GM18951 (cell line): ENCODE measurements at regions of chr9 and their contacts with region 1.

Region 1: DNA sequence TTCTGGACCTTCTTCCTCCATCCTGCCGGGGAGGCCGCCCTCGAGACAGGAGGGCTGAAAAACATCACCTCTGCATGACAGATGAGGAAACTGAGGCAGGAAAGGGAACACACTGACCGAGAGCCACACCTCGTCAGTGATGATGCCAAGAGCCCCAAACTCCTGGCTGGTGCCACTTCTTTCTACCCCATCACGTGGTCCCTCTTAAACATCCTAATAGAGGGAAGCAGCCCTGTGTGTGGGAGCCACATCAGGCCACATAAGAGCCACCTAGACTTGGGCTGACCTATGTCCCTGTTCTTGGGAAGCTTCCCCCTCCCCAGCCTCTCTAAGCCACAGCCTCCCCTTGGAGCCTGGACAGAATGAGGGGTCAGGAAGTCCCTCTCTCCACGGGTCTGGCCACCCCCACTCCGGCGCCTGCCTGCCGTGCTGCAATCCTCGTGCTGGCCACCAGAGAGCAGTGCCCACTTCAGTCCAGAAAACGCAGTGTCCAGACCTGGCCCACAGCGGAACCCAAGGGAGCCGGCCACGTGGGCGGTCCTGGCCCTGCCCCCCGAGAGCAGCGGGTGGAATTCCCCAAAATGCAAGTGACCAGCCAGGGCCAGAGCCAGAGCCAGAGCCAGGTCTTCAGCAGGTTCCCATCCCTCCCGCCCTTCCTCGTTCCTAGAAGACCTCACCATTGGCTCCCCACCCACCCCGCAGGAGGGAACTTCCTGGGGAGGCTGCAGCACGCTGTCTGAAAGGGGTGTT is 54.7 kb upstream of the SARDH start:
- POLR2A ChIP-seq: no peak

Region 2: GRCh38 chr9:133647765-133648469 is 145.0 kb before region 1 on chr9:
- in situ Hi-C with region 1: no loop called
- POLR2A ChIP-seq: no peak

Region 3: DNA sequence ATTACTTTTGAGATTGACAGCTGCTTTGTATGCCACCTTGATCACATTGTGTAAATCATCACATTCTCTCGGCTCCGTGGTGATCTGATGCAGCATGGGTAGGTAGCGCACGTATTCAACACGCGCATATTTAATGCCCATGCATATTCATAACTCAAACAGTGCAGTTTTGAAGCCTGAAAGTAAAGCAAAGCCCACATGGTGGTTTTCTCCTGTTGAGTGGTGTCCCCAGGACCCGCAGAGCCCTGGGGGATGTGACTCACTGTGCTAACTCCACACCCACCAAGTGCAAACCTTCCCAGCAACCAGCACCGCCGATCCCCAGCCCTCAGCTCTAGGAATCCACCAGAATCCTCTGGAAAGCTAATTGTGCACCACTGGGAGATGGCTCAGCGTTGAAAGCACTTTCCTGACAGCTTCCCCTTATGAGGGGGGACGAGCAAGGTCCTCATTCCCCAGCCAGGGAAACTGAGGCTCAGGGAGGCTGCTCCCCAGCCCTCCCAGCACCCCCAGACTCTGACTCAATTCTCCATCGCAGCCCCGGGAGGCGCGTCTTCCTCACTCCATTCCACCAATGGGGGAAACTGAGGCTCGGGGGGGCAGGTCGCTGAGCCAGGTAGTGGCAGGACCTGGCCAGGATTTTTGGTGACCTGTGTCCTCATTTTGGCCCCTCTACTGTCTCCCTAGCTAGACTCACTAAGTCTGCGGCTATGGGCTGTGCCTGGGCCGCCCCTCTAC is 101.1 kb before region 1 on chr9:
- in situ Hi-C with region 1: no loop called
- POLR2A ChIP-seq: no peak

Region 4: DNA sequence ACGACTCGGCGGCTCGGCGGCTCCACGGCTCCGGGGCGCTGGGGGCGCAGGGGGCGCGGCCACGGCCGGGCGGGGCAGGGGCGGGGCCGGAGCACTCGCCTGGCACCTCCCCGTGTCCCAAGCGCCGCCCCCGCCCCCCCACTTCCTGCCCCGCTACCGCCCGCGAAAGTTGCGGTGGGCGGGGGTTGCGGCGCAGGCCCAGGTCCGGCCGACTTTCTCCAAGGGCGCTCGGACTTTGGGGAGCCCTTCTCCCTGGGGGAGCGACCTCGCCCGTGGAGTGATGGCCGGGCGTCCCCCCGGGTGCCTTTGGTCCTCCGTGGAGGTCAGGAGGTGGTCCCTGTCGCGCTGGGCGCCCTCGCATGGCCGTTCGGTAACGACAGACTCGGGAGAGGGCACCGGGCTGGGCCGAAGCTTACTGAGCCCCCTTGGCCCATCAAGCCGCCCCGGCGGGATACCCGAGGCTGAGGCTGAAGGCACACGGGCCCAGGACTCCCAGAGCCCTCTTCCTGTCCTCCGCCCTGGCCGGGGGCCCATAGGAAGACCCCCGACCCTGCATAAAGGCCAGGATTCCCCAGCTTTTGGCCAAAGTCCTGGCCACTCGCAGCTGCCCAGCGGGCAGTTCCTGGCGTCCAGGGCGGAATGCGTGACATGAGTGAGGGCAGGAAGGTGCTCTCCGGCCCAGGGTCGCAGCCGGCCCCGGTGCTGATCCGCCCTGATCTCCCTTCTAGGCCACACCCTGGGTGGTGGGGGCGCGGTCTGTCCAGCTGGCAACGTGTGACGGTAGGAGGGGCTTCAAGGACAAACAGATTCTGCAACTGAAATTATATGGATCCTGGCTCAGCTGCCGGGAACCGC is 200.1 kb after region 1 on chr9:
- in situ Hi-C with region 1: loop called (anchors 10 kb)
- POLR2A ChIP-seq: peak; percentile 49